ENCODE measurements at regions of chr12 and their contacts with region 1.

Region 1: DNA sequence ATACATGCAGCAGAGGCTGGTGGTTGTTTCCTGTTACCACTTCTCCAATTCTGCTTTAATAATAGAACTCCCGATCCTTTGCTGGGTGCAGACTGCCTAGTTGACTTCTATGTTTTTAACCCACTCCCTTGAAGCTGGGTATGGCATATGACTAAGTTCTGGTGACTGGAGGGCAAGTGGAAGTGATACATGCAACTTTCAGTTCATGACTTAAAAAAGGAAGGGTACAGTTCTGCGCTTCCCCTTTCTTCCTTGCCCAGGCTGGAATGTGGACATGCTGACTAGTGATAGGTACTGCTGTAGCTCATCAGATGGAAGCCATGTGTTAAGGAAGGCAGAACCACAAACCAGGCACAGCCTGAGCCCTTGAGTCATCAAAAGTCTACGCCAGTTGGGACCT is 2.4 kb upstream of the A2M start:
- DNase-seq: peak; percentile 18 to 31
- ATAC-seq: peak in 1 of 2 donors; percentile 28
- H3K4me3 ChIP-seq: no peak overlapping the region
- H3K27ac ChIP-seq: peak overlapping the region; percentile 64 to 69 (median 66)
- H3K4me1 ChIP-seq: peaks cover 26 to 42% of the 10 kb centered on the region in 2 donors
- H3K27me3 ChIP-seq: no peaks in the 10 kb centered on the region
- CTCF ChIP-seq: no peak
- POLR2A ChIP-seq: no peak

Region 2: GRCh38 chr12:9169979-9170634 is 51.9 kb after region 1 on chr12:
- in situ Hi-C with region 1: no loop called
- intact Hi-C with region 1: loop called (anchors 5 kb)
- DNase-seq: no peak
- ATAC-seq: peak in 1 of 2 donors; percentile 45
- H3K4me3 ChIP-seq: no peak overlapping the region
- H3K27ac ChIP-seq: peak overlapping the region in 3 of 4 donors; percentile 11 to 48 (median 45)
- H3K4me1 ChIP-seq: peaks cover 0 to 4% of the 10 kb centered on the region in 2 donors
- H3K27me3 ChIP-seq: no peaks in the 10 kb centered on the region
- CTCF ChIP-seq: no peak
- POLR2A ChIP-seq: no peak

Measured in gastrocnemius medialis (tissue), 4 donors.